ENCODE measurements at regions of chr2 and their contacts with region 1.

Region 1: GRCh38 chr2:74250189-74250631 is 51.8 kb downstream of the MTHFD2 start:
- DNase-seq: peak in 6 of 10 donors; percentile 18 to 89 (median 36)

Region 2: DNA sequence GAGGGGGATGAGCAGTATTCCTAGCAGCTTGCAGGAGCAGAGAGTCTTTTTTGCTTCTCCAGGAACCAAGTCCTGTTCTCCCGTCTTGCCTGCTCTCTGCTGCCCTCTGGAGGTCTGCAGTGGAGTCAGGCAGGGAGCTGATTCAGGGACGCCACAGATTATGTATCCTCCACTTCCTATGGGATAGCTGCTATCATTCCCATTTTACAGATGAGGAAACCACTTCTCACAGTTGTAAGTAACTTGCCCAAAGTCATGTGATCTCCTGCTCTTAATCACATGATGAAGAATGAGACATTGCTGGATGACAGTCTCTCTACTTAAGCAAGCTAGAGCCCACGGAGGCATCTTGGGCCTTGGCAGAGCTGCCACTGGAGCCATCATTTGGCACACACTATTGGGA is 84.7 kb after region 1 on chr2:
- intact Hi-C with region 1: loop called (anchors 5 kb)
- DNase-seq: peak; percentile 61 to 97 (median 84)

Region 3: DNA sequence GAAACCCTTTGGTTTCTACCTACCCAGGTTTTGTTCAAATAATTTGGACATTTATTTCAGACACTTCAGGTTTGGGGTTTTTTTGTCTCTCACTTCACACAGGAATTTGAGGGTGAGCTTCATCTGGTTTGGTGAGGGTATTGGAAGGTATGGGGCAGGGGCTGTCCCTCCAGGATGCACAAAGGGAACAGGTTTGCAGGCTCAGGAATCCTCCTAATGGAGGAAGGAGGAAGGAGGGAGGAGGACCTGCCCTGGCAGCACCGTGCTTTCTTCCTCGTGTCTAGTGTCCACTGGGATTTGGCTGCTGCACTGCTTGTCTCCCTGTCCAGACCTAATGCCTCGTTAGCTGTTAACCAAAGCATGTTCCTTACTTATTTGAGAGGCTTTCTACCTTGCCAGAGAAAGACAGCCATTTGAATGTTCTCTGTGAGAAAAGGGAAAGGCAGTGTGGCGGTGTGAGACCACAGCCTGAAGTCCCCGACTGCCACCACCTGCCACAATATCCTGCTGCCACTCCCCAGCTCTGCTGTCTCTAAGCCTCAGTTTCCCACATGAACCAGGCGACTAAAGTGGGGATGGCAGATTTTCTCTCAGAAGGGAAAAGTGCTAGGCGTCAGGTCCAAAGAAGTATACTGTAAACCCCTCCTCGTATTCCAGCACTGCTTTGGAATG is 95.2 kb after region 1 on chr2:
- intact Hi-C with region 1: no loop called
- DNase-seq: no peak

Region 4: GRCh38 chr2:74391580-74392448 is 141.6 kb after region 1 on chr2:
- intact Hi-C with region 1: loop called (anchors 2 kb)
- DNase-seq: peak; percentile 85 to 99 (median 94)

Measured in posterior cingulate gyrus (tissue), 11 donors.